Endothelial cell of umbilical vein (primary cell): ENCODE measurements at regions of chr11 and their contacts with region 1.

Region 1: DNA sequence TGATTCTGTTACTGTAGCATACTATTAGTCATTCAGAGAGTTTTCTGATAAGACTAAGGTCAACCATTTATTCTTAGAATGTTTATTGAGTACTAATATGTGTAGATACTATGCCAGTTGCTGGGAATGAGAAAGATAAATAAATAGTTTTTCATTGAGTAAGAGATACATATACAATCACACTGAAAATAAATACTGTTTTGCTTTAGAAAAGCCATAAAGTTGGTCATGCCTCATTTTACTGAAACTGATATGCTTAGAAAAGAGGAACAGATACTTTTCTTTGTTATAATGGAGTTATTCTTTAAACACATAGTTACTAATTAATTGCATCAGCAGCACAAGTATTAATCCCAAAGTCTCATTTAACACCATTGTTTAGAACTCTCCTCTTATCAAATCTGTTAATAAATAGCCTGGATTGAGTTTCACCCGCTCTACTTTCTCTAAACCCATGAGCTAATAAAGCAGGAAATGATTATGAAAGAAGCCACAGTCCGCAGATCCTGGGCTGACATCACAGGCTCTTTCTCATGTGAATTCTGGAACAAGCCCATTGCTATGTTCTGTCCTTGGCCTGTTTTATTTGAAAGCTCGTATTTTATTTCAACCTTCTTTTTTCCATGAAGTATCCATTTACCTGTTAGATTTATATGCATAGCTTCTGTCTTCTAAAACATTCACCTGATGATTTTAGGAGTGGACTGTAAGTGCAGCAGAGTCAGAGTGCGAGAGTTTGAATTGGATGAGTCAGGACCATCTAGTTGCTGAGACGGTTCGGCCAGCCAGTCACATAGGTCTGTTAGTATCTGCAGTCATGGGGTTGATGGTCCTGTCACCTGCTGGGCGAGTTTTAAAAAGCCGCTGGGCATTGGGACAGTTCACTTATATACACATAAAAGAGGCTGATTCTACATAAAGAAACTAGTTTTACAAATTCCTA is 35.5 kb downstream of the PIWIL4 start:
- DNase-seq: peak; percentile 66
- H3K4me3 ChIP-seq: no peak overlapping the region
- H3K27ac ChIP-seq: no peak overlapping the region
- H3K4me1 ChIP-seq: no peaks in the 10 kb centered on the region
- H3K27me3 ChIP-seq: no peaks in the 10 kb centered on the region
- CTCF ChIP-seq: peak; percentile 31 to 40
- POLR2A ChIP-seq: no peak

Region 2: GRCh38 chr11:94613120-94613519 is 10.4 kb after region 1 on chr11:
- CTCF ChIA-PET with region 1: interaction called, 13 read pairs
- POLR2A ChIA-PET with region 1: no interaction called
- dilution Hi-C with region 1: no loop called
- intact Hi-C with region 1: no loop called
- DNase-seq: no peak
- H3K4me3 ChIP-seq: no peak overlapping the region
- H3K27ac ChIP-seq: no peak overlapping the region
- H3K4me1 ChIP-seq: no peaks in the 10 kb centered on the region
- H3K27me3 ChIP-seq: no peaks in the 10 kb centered on the region
- CTCF ChIP-seq: no peak
- POLR2A ChIP-seq: no peak

Region 3: DNA sequence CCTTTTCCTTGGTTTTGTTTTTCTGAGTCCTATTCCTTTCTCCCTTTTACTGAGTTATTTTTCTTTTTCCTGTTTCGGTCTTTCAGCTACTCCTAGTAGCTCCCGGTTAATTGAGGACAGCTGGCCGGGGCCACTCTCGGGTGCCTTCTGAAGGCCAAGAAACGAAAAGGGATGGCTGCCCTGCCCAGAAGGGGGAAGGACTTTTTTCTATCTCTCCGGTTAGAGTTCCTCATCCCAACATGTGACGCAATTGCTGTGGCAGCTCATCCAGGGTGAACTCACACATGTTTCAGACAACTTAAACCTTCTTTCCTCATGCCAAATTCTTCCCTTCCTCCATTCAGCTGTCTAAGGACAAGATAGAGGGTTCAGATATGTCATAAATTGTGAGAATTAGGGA is 48.1 kb after region 1 on chr11:
- CTCF ChIA-PET with region 1: no interaction called
- POLR2A ChIA-PET with region 1: no interaction called
- dilution Hi-C with region 1: no loop called
- intact Hi-C with region 1: no loop called
- DNase-seq: no peak
- H3K4me3 ChIP-seq: no peak overlapping the region
- H3K27ac ChIP-seq: no peak overlapping the region
- H3K4me1 ChIP-seq: no peaks in the 10 kb centered on the region
- H3K27me3 ChIP-seq: peaks cover 0 to 3% of the 10 kb centered on the region in 2 experiments
- CTCF ChIP-seq: no peak
- POLR2A ChIP-seq: no peak